Naive thymus-derived CD4-positive, alpha-beta T cell (primary cell): ENCODE measurements at regions of chr1 and their contacts with region 1.

Region 1: DNA sequence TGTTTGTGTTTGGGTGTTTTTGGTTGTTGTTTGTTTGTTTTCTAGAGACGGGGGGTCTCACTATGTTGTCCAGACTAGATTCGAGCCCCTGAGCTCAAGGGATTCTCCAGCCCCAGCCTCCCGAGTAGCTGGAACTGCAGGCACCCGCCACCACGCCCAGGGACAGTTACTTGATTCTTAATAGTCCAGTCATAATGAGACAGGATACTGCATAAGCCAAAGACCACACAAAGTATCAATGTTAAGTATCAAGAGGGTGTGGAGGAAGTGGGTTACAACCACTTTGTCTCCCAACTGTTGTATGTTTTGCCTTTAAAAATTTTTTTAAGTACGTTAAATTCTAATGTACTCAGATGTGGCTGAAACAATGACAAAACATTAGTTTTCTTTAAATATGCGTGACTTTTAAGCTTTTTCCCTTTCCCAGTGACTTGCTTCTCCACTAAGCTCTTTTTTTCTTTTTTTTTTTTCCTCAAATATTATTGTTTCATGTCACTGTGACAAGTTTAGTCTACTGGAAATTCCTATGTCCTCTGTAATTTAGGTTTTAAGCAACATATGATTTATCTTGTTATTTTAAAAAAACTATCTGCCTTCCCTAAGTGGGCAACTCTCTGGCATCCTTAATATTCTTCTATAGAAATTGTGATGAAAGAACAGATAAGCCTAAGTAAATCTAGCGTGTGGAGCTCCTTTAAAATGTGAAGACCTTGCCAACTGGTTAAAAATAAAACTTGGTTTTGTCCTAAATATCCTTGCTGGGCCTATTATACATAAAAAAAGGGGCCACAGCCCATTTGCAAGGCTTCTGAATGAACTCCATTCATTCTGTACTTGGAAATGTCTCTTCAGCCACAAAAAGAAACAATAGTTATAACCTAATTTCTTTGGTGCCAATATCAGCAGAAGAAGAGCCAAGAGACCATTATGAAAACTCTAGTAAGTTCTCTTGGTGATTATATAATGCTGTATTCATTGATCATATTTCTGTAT is 56.2 kb upstream of the DPH5 start:
- DNase-seq: peak in 7 of 9 donors; percentile 24 to 49 (median 40)
- ATAC-seq: peak; percentile 95
- H3K4me3 ChIP-seq: no peak overlapping the region
- H3K4me3 Mint-ChIP-seq: peak overlapping the region; percentile 42 to 79 (median 72)
- H3K27ac ChIP-seq: no peak overlapping the region
- H3K27ac Mint-ChIP-seq: peak overlapping the region; percentile 69 to 95 (median 82)
- H3K4me1 ChIP-seq: peaks cover 29 to 31% of the 10 kb centered on the region in 2 donors
- H3K4me1 Mint-ChIP-seq: peaks cover 29 to 63% (median 57%) of the 10 kb centered on the region in 7 donors
- H3K27me3 ChIP-seq: no peaks in the 10 kb centered on the region
- H3K27me3 Mint-ChIP-seq: no peaks in the 10 kb centered on the region

Region 2: DNA sequence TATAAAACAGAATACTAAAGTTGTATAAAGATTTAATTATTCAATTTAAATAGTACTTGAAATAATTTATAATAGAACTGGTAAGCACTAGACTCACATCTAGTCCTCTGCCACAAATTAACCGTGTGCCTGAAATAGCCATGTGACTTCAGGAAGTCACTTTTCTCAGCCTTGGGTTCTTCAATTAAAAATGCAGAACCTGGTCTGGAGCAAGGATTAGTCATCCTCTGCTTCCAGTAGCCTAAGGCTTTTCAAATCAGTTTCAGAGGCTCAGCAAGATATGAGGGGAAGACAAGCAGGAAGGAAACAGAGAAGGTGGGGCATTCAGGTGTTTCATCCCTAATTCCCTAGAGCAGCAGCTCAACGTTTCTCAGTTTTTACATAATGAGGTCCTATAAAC is 79.2 kb before region 1 on chr1:
- CTCF ChIA-PET with region 1: no interaction called
- POLR2A ChIA-PET with region 1: no interaction called
- intact Hi-C with region 1: loop called in 1 of 2 experiments (anchors 2 kb)
- DNase-seq: no peak
- ATAC-seq: peak; percentile 57
- H3K4me3 ChIP-seq: no peak overlapping the region
- H3K4me3 Mint-ChIP-seq: peak overlapping the region in 7 of 10 donors; percentile 5 to 60 (median 29)
- H3K27ac ChIP-seq: no peak overlapping the region
- H3K27ac Mint-ChIP-seq: peak overlapping the region in 7 of 9 donors; percentile 41 to 95 (median 85)
- H3K4me1 ChIP-seq: peaks cover 28 to 47% of the 10 kb centered on the region in 2 donors
- H3K4me1 Mint-ChIP-seq: peaks cover 42 to 74% (median 56%) of the 10 kb centered on the region in 7 donors
- H3K27me3 ChIP-seq: no peaks in the 10 kb centered on the region
- H3K27me3 Mint-ChIP-seq: no peaks in the 10 kb centered on the region

Region 3: DNA sequence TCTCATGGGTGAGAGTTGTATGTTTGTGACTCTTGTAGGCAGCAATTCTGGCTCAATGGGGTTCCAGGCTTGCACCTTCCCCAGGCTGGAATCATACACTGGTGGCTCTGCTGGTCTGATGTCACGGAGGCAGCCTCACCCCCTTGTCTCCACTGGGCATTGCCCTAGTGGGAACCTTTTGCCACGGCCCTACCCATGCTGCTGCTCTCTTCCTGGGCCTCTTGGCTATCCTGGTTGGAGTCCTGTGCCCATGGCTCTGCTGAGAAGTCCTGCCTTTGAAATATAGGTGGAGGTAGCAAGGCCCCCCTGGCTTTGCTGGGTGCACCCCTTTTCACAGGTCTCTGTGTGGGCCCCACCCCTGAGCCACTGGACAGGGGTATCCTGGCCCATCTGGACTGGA is 13.8 kb after region 1 on chr1:
- CTCF ChIA-PET with region 1: no interaction called
- POLR2A ChIA-PET with region 1: no interaction called
- intact Hi-C with region 1: loop called in 1 of 2 experiments (anchors 2 kb)
- DNase-seq: no peak
- ATAC-seq: no peak
- H3K4me3 ChIP-seq: no peak overlapping the region
- H3K4me3 Mint-ChIP-seq: no peak overlapping the region
- H3K27ac ChIP-seq: no peak overlapping the region
- H3K27ac Mint-ChIP-seq: no peak overlapping the region
- H3K4me1 ChIP-seq: no peaks in the 10 kb centered on the region
- H3K4me1 Mint-ChIP-seq: peaks cover 0 to 8% (median 3%) of the 10 kb centered on the region in 7 donors
- H3K27me3 ChIP-seq: no peaks in the 10 kb centered on the region
- H3K27me3 Mint-ChIP-seq: no peaks in the 10 kb centered on the region

Region 4: GRCh38 chr1:101122452-101123166 is 40.8 kb after region 1 on chr1:
- CTCF ChIA-PET with region 1: no interaction called
- POLR2A ChIA-PET with region 1: interaction called, 3 read pairs
- intact Hi-C with region 1: loop called in 1 of 2 experiments (anchors 2 kb)
- DNase-seq: peak in 3 of 9 donors; percentile 19 to 32 (median 28)
- ATAC-seq: peak; percentile 66
- H3K4me3 ChIP-seq: no peak overlapping the region
- H3K4me3 Mint-ChIP-seq: peak overlapping the region; percentile 12 to 81 (median 59)
- H3K27ac ChIP-seq: peak overlapping the region; percentile 63
- H3K27ac Mint-ChIP-seq: peak overlapping the region; percentile 36 to 95 (median 91)
- H3K4me1 ChIP-seq: peaks cover 26 to 32% of the 10 kb centered on the region in 2 donors
- H3K4me1 Mint-ChIP-seq: peaks cover 28 to 83% (median 65%) of the 10 kb centered on the region in 7 donors
- H3K27me3 ChIP-seq: no peaks in the 10 kb centered on the region
- H3K27me3 Mint-ChIP-seq: peaks cover 0 to 4% (median 0%) of the 10 kb centered on the region in 5 donors

Region 5: GRCh38 chr1:101309334-101310311 is 227.8 kb after region 1 on chr1:
- CTCF ChIA-PET with region 1: no interaction called
- POLR2A ChIA-PET with region 1: no interaction called
- intact Hi-C with region 1: no loop called
- DNase-seq: peak; percentile 53 to 95 (median 91)
- ATAC-seq: peak; percentile 86
- H3K4me3 ChIP-seq: peak overlapping the region; percentile 42
- H3K4me3 Mint-ChIP-seq: peak overlapping the region; percentile 74 to 89 (median 85)
- H3K27ac ChIP-seq: peak overlapping the region; percentile 92
- H3K27ac Mint-ChIP-seq: peak overlapping the region; percentile 93 to 99 (median 98)
- H3K4me1 ChIP-seq: peaks cover 46 to 53% of the 10 kb centered on the region in 2 donors
- H3K4me1 Mint-ChIP-seq: peaks cover 43 to 79% (median 66%) of the 10 kb centered on the region in 7 donors
- H3K27me3 ChIP-seq: no peaks in the 10 kb centered on the region
- H3K27me3 Mint-ChIP-seq: peaks cover 0 to 22% (median 0%) of the 10 kb centered on the region in 5 donors